ENCODE measurements at regions of chr9 and their contacts with region 1.

Region 1: GRCh38 chr9:38651400-38652042 is 31.1 kb upstream of the ANKRD18A start:
- DNase-seq: no peak
- H3K4me3 ChIP-seq: no peak overlapping the region
- H3K27ac ChIP-seq: peak overlapping the region in 3 of 59 donors; percentile 32 to 47 (median 33)
- H3K27me3 ChIP-seq: peaks cover 0 to 4% (median 0%) of the 10 kb centered on the region in 45 donors
- CTCF ChIP-seq: no peak

Region 2: GRCh38 chr9:38707885-38708637 is 56.5 kb after region 1 on chr9:
- intact Hi-C with region 1: loop called in 1 of 2 experiments (anchors 5 kb)
- DNase-seq: no peak
- H3K4me3 ChIP-seq: no peak overlapping the region
- H3K27ac ChIP-seq: no peak overlapping the region
- H3K27me3 ChIP-seq: peaks cover 0 to 5% (median 0%) of the 10 kb centered on the region in 45 donors
- CTCF ChIP-seq: peak in 6 of 56 donors; percentile 4 to 20 (median 15)

Region 3: GRCh38 chr9:38768351-38768761 is 116.8 kb after region 1 on chr9:
- intact Hi-C with region 1: no loop called
- DNase-seq: no peak
- H3K4me3 ChIP-seq: no peak overlapping the region
- H3K27ac ChIP-seq: no peak overlapping the region
- H3K27me3 ChIP-seq: peaks cover 0 to 5% (median 0%) of the 10 kb centered on the region in 45 donors
- CTCF ChIP-seq: no peak

Measured in dorsolateral prefrontal cortex (tissue), 120 donors.